ENCODE measurements at regions of chr11 and their contacts with region 1.

Region 1: GRCh38 chr11:115324581-115325432 is 179.4 kb downstream of the CADM1 start:
- DNase-seq: peak; percentile 6 to 30 (median 9)
- H3K4me3 ChIP-seq: no peak overlapping the region
- H3K4me3 Mint-ChIP-seq: no peak overlapping the region
- H3K27ac ChIP-seq: no peak overlapping the region
- H3K27ac Mint-ChIP-seq: no peak overlapping the region
- H3K4me1 ChIP-seq: no peaks in the 10 kb centered on the region
- H3K4me1 Mint-ChIP-seq: peaks cover 1% of the 10 kb centered on the region
- H3K27me3 ChIP-seq: no peaks in the 10 kb centered on the region
- H3K27me3 Mint-ChIP-seq: peaks cover 1 to 9% (median 7%) of the 10 kb centered on the region in 3 donors
- CTCF ChIP-seq: peak; percentile 76

Region 2: GRCh38 chr11:114745150-114745671 is 579.6 kb before region 1 on chr11:
- intact Hi-C with region 1: no loop called
- DNase-seq: no peak
- H3K4me3 ChIP-seq: no peak overlapping the region
- H3K4me3 Mint-ChIP-seq: no peak overlapping the region
- H3K27ac ChIP-seq: no peak overlapping the region
- H3K27ac Mint-ChIP-seq: no peak overlapping the region
- H3K4me1 ChIP-seq: no peaks in the 10 kb centered on the region
- H3K4me1 Mint-ChIP-seq: no peaks in the 10 kb centered on the region
- H3K27me3 ChIP-seq: no peaks in the 10 kb centered on the region
- H3K27me3 Mint-ChIP-seq: peaks cover 0 to 2% (median 2%) of the 10 kb centered on the region in 3 donors
- CTCF ChIP-seq: no peak

Region 3: GRCh38 chr11:116224154-116224888 is 899.5 kb after region 1 on chr11:
- intact Hi-C with region 1: loop called in 1 of 2 experiments (anchors 10 kb)
- DNase-seq: peak; percentile 3 to 17 (median 12)
- H3K4me3 ChIP-seq: no peak overlapping the region
- H3K4me3 Mint-ChIP-seq: no peak overlapping the region
- H3K27ac ChIP-seq: no peak overlapping the region
- H3K27ac Mint-ChIP-seq: peak overlapping the region in 1 of 7 donors; percentile 36
- H3K4me1 ChIP-seq: no peaks in the 10 kb centered on the region
- H3K4me1 Mint-ChIP-seq: no peaks in the 10 kb centered on the region
- H3K27me3 ChIP-seq: no peaks in the 10 kb centered on the region
- H3K27me3 Mint-ChIP-seq: peaks cover 4 to 11% (median 7%) of the 10 kb centered on the region in 3 donors
- CTCF ChIP-seq: peak; percentile 83

Region 4: DNA sequence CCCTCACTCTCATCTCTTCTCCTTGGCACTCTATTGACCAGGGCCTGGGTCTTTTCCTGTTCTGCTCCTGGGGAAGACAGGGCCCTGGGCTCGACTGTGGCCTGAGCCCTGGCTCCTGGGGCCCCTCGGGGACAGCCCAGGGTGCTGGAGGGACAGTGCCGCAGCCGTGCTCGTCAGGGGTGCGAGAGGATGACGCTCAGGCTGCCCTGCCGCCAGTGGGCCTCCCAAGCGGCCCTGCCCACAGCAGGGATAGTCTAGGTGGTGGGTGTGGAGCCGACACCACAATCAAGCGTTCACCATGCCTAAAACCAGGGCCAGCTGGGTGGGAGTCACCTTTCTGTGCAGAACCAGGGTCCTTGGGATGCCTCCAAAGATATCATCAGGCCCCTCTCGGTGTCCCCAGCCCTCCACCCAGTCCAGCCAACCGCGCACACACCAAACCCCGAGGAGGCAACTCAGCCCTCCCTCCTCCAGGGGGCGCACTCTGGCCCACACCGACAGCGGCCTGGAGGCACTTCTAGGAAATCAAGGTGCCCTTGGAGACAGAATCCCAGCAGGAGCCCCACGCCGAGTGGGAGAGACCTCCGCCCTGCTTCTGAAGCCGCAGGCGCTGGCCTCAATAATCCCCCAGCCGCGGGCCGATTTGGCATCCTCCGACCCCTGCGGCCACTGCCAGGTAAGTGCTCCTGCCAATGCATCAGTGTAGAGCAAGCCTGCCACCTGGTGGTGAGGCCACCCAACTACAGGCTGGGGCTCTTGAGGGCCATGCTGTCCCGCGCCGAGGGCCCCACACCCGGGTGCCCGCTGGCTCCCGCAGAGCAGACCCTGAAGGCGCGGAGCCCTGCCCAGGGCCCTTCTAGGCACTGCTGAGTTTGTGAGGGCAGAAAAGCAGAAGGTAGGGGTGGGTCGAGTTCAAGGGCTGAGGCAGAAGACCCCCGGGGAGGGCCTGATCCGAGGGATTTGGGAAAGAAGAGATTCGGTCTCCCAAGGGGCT is 951.5 kb after region 1 on chr11:
- intact Hi-C with region 1: loop called (anchors 2 kb)
- DNase-seq: peak; percentile 44 to 64 (median 53)
- H3K4me3 ChIP-seq: peak overlapping the region in 1 of 3 experiments; percentile 30
- H3K4me3 Mint-ChIP-seq: no peak overlapping the region
- H3K27ac ChIP-seq: no peak overlapping the region
- H3K27ac Mint-ChIP-seq: no peak overlapping the region
- H3K4me1 ChIP-seq: peaks cover 0 to 5% of the 10 kb centered on the region in 2 donors
- H3K4me1 Mint-ChIP-seq: no peaks in the 10 kb centered on the region
- H3K27me3 ChIP-seq: no peaks in the 10 kb centered on the region
- H3K27me3 Mint-ChIP-seq: peaks cover 1 to 16% (median 15%) of the 10 kb centered on the region in 3 donors
- CTCF ChIP-seq: peak; percentile 94

Measured in CD14-positive monocyte (primary cell).